ENCODE measurements at regions of chr2 and their contacts with region 1.

Region 1: GRCh38 chr2:69464575-69464974 is 27.3 kb upstream of the NFU1 start:
- DNase-seq: no peak
- ATAC-seq: no peak
- H3K4me3 ChIP-seq: no peak overlapping the region
- H3K4me3 Mint-ChIP-seq: no peak overlapping the region
- H3K27ac ChIP-seq: no peak overlapping the region
- H3K27ac Mint-ChIP-seq: peak overlapping the region in 1 of 2 donors; percentile 12
- H3K4me1 ChIP-seq: no peaks in the 10 kb centered on the region
- H3K4me1 Mint-ChIP-seq: peaks cover 0 to 4% (median 3%) of the 10 kb centered on the region in 3 donors
- H3K27me3 ChIP-seq: no peaks in the 10 kb centered on the region
- H3K27me3 Mint-ChIP-seq: no peaks in the 10 kb centered on the region

Region 2: GRCh38 chr2:69449906-69450305 is 14.7 kb before region 1 on chr2:
- CTCF ChIA-PET with region 1: no interaction called
- POLR2A ChIA-PET with region 1: no interaction called
- DNase-seq: no peak
- ATAC-seq: no peak
- H3K4me3 ChIP-seq: no peak overlapping the region
- H3K4me3 Mint-ChIP-seq: no peak overlapping the region
- H3K27ac ChIP-seq: no peak overlapping the region
- H3K27ac Mint-ChIP-seq: no peak overlapping the region
- H3K4me1 ChIP-seq: no peaks in the 10 kb centered on the region
- H3K4me1 Mint-ChIP-seq: peaks cover 2 to 7% (median 6%) of the 10 kb centered on the region in 3 donors
- H3K27me3 ChIP-seq: no peaks in the 10 kb centered on the region
- H3K27me3 Mint-ChIP-seq: no peaks in the 10 kb centered on the region

Region 3: DNA sequence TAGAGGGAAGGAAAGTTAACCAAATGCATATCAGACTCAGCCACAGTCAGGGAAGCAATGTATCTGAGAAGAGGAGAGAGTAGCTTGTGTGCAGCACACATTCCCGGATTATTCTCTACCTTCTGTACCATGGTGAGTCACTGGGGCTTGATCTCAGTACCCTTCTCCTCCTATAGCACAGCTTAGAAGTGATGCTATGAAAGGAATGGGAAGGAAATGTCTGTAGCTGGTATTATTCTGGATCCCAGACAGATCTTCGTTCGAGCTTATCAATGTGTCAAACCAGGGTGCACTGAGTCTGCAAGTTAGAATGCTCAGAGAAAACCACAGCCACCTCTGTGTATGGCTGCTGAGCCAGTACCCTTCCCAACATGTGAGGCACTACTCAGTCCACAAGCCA is 60.7 kb after region 1 on chr2:
- CTCF ChIA-PET with region 1: no interaction called
- POLR2A ChIA-PET with region 1: interaction called in 1 of 2 experiments, 16 read pairs
- DNase-seq: no peak
- ATAC-seq: no peak
- H3K4me3 ChIP-seq: no peak overlapping the region
- H3K4me3 Mint-ChIP-seq: no peak overlapping the region
- H3K27ac ChIP-seq: no peak overlapping the region
- H3K27ac Mint-ChIP-seq: peak overlapping the region in 1 of 2 donors; percentile 0
- H3K4me1 ChIP-seq: no peaks in the 10 kb centered on the region
- H3K4me1 Mint-ChIP-seq: peaks cover 0 to 3% (median 0%) of the 10 kb centered on the region in 3 donors
- H3K27me3 ChIP-seq: no peaks in the 10 kb centered on the region
- H3K27me3 Mint-ChIP-seq: no peaks in the 10 kb centered on the region

Region 4: DNA sequence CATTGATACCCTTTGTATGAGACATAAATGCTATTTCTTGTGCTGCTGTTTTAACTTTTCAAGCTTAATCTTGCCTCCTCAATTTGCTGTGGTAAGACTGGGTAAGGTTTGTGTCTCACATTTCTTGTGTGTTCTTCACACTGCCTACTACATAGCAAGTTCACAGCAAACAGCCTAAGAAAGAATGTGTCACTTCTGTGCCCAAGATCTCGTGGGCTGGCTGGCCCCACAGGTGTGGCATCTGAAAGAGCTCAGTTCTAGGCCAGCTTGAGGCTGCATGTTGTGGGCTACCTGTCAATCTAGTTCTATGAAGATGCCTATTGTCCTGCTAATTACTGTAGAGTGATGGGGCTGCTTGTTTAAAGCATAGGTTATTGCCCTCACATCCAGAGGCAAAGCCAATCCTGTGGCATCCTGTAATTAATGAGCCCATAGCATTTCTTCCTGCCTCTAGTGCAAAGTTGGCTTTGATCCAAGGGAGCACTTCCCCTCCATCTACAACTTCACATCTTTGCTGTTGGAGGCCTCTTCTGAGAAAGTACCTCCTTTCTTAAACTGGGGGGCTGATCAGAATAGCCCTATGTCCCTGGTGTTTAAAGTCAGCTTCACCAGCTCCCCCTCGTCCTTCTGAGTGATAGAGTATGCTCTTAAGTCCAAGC is 537.8 kb after region 1 on chr2:
- CTCF ChIA-PET with region 1: no interaction called
- POLR2A ChIA-PET with region 1: interaction called in 1 of 2 experiments, 10 read pairs
- DNase-seq: peak in 2 of 35 experiments; percentile 13 to 26
- ATAC-seq: no peak
- H3K4me3 ChIP-seq: no peak overlapping the region
- H3K4me3 Mint-ChIP-seq: no peak overlapping the region
- H3K27ac ChIP-seq: peak overlapping the region; percentile 19
- H3K27ac Mint-ChIP-seq: peak overlapping the region; percentile 44 to 73
- H3K4me1 ChIP-seq: peaks cover 2 to 5% of the 10 kb centered on the region in 2 experiments
- H3K4me1 Mint-ChIP-seq: peaks cover 10 to 13% (median 11%) of the 10 kb centered on the region in 3 donors
- H3K27me3 ChIP-seq: no peaks in the 10 kb centered on the region
- H3K27me3 Mint-ChIP-seq: no peaks in the 10 kb centered on the region